ENCODE measurements at regions of chr11 and their contacts with region 1.

Region 1: DNA sequence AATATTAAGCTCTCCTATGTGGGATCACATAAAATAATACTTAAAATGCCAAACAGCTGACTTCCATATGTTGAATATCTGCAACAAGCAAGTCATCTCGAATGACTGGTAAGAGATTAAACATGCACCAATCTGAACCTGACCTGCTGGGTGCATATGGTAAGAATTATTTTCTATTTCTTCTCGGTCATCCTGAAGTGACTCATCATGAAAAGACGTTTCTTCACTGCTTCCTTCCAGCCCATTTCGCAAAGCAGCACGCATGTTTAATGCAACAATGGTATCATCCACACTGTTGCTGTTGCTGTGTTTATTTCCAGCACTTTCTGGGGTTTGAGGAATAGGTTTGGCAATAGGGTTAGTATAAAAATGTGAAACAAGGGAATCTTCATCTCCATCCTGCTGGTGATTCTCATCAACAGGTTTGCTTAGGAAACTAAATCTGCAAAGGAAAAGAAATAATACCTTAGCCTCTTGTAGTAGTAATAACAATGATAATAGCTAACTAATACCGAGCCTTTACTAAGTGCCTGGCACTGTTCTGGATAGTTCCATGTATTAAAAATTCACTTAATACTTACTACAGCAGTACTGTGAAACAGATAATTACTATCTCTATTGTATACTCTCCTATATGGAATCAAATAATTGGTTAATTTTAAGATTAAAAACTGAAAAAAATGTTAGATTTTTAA is 52.0 kb upstream of the CHRNA10 start:
- DNase-seq: peak; percentile 80 to 90 (median 89)
- H3K4me3 ChIP-seq: no peak overlapping the region
- H3K4me3 Mint-ChIP-seq: peak overlapping the region in 1 of 2 donors; percentile 51
- H3K27ac ChIP-seq: peak overlapping the region; percentile 82 to 83
- H3K27ac Mint-ChIP-seq: peak overlapping the region; percentile 86 to 96 (median 93)
- H3K4me1 ChIP-seq: peaks cover 15 to 21% of the 10 kb centered on the region in 2 donors
- H3K4me1 Mint-ChIP-seq: peaks cover 15% of the 10 kb centered on the region
- H3K27me3 ChIP-seq: no peaks in the 10 kb centered on the region
- H3K27me3 Mint-ChIP-seq: no peaks in the 10 kb centered on the region
- CTCF ChIP-seq: no peak

Region 2: GRCh38 chr11:3153291-3153861 is 569.8 kb before region 1 on chr11:
- intact Hi-C with region 1: no loop called
- DNase-seq: peak in 1 of 3 donors; percentile 22
- H3K4me3 ChIP-seq: no peak overlapping the region
- H3K4me3 Mint-ChIP-seq: peak overlapping the region; percentile 24 to 68
- H3K27ac ChIP-seq: peak overlapping the region; percentile 34 to 65
- H3K27ac Mint-ChIP-seq: peak overlapping the region in 6 of 7 donors; percentile 66 to 96 (median 78)
- H3K4me1 ChIP-seq: peaks cover 51 to 56% of the 10 kb centered on the region in 2 donors
- H3K4me1 Mint-ChIP-seq: peaks cover 59% of the 10 kb centered on the region
- H3K27me3 ChIP-seq: no peaks in the 10 kb centered on the region
- H3K27me3 Mint-ChIP-seq: no peaks in the 10 kb centered on the region
- CTCF ChIP-seq: no peak

Region 3: DNA sequence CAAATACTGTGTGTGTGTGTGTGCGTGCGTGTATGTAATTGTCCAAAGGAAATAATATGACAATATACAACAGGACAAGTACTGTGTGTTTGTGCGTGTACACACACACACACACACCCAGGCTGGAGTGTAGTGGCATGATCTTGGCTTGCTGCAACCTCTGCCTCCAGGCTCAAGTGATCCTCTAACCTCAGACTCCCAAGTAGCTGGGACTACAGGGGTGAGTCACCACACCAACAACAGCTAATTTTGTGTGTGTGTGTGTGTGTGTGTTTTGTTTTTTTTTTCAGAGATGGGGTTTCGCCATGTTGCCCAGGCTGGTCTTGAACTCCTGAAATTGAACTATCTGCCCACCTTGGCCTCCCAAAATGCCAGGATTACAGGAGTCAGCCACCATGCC is 12.7 kb after region 1 on chr11:
- intact Hi-C with region 1: no loop called
- DNase-seq: peak in 1 of 3 donors; percentile 10
- H3K4me3 ChIP-seq: no peak overlapping the region
- H3K4me3 Mint-ChIP-seq: no peak overlapping the region
- H3K27ac ChIP-seq: peak overlapping the region in 1 of 2 donors; percentile 8
- H3K27ac Mint-ChIP-seq: peak overlapping the region in 1 of 7 donors; percentile 68
- H3K4me1 ChIP-seq: no peaks in the 10 kb centered on the region
- H3K4me1 Mint-ChIP-seq: peaks cover 3% of the 10 kb centered on the region
- H3K27me3 ChIP-seq: no peaks in the 10 kb centered on the region
- H3K27me3 Mint-ChIP-seq: no peaks in the 10 kb centered on the region
- CTCF ChIP-seq: no peak

Region 4: DNA sequence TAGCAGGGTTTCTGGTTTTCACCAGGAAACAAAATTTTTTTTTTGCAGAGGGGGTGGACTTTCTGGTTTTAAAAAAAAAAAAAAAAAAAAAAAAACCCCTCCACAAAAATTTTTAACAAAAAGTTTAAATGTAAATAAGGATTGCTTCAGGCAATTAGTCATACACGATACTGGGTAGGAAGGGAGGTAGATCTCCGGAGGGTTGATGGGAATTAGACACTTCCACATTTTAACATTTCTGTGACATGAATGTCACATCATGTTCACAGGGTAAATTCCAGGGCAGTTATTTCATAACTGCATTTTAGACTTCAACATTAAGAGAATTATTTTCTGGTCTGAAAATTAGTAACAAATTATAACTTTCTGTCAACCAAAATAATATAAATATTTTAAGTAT is 58.3 kb after region 1 on chr11:
- intact Hi-C with region 1: loop called in 1 of 2 experiments (anchors 10 kb)
- DNase-seq: peak; percentile 79 to 94 (median 91)
- H3K4me3 ChIP-seq: no peak overlapping the region
- H3K4me3 Mint-ChIP-seq: no peak overlapping the region
- H3K27ac ChIP-seq: peak overlapping the region in 1 of 2 donors; percentile 88
- H3K27ac Mint-ChIP-seq: peak overlapping the region; percentile 81 to 94 (median 91)
- H3K4me1 ChIP-seq: peaks cover 33 to 47% of the 10 kb centered on the region in 2 donors
- H3K4me1 Mint-ChIP-seq: peaks cover 41% of the 10 kb centered on the region
- H3K27me3 ChIP-seq: no peaks in the 10 kb centered on the region
- H3K27me3 Mint-ChIP-seq: no peaks in the 10 kb centered on the region
- CTCF ChIP-seq: no peak